Motor neuron (in vitro differentiated cells): ENCODE measurements at regions of chr10 and their contacts with region 1.

Region 1: DNA sequence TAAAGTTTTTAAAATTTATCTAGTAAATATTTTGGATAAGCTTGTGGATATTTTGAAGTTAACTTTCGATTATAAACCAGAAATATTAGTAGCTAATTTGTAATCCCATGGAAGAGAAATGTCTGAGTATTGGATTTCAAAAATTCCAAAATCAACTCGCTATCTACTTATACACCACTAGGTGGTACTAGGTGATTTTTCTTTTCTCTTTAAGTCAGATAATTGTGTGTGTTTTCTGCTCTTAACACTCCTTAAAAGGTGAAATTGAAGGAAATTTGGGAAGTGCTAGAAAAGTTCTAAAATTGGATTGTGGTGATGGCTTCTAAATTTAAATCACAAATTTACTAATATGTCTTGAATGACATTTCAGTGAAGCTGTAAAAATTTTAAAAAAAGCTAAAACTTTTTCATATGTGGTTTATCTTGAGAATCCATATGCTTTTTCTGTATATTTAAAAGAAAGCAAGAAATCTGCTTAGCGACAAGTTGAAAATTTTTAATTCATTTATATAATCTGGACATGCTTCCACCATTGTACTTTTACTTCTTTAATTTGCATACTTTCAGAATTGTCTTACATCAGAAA is 90.2 kb downstream of the IPMK start:
- ATAC-seq: no peak
- H3K4me3 ChIP-seq: no peak overlapping the region
- H3K27ac ChIP-seq: no peak overlapping the region
- H3K4me1 ChIP-seq: peaks cover 0 to 7% of the 10 kb centered on the region in 2 donors

Region 2: GRCh38 chr10:58275908-58276307 is 98.5 kb after region 1 on chr10:
- in situ Hi-C with region 1: loop called in 3 of 9 experiments (anchors 5 to 25 kb)
- ATAC-seq: peak in 1 of 8 experiments; percentile 42
- H3K4me3 ChIP-seq: no peak overlapping the region
- H3K27ac ChIP-seq: no peak overlapping the region
- H3K4me1 ChIP-seq: no peaks in the 10 kb centered on the region

Region 3: DNA sequence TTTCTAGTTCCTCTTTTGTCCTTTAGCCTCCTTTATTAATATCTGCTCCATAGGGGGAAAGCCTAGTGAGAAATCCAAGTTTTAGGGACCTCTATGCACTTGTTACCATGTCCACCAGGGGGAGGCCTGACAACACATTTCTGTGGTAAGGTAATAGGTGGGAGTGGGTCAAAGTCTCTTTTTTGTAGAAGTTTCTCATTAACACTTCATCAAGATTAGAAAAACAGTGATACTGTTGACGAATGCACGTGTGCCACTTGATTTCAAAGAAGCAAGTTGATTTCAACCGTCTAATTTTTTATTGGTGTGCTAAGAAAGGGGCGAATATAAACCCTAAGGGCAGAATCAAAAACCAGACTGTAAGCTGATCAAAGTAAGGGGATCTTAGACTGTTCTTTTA is 122.1 kb after region 1 on chr10:
- in situ Hi-C with region 1: loop called in 2 of 9 experiments (anchors 25 kb)
- ATAC-seq: peak in 5 of 8 experiments; percentile 45 to 97 (median 75)
- H3K4me3 ChIP-seq: no peak overlapping the region
- H3K27ac ChIP-seq: no peak overlapping the region
- H3K4me1 ChIP-seq: peaks cover 0 to 4% of the 10 kb centered on the region in 2 donors